CD8-positive, alpha-beta T cell (primary cell): ENCODE measurements at regions of chr1 and their contacts with region 1.

Region 1: DNA sequence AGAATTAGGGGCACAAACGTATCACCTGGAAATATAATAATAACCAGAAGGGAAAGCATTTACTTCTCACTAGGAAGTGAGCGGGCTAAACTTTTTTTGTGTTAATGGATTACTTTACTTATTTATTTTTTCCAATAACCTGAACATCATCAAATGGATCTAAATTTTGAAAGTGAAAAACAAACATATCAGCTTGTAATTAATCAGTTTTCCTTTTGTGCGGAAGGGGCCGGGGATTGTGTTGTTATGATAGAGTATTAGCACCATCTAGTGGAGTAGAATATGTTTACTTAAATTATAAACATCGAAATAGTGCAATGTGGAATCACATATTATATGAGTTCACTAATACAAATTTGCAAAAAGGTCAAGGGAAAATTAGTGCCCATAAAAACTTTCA is 9.0 kb downstream of the CFH start:
- DNase-seq: peak in 2 of 9 experiments; percentile 30 to 45
- ATAC-seq: peak; percentile 40
- H3K4me3 ChIP-seq: no peak overlapping the region
- H3K4me3 Mint-ChIP-seq: peak overlapping the region; percentile 20
- H3K27ac ChIP-seq: no peak overlapping the region
- H3K27ac Mint-ChIP-seq: no peak overlapping the region
- H3K4me1 ChIP-seq: no peaks in the 10 kb centered on the region
- H3K4me1 Mint-ChIP-seq: peaks cover 5% of the 10 kb centered on the region
- H3K27me3 ChIP-seq: no peaks in the 10 kb centered on the region
- H3K27me3 Mint-ChIP-seq: no peaks in the 10 kb centered on the region
- CTCF ChIP-seq: peak; percentile 51

Region 2: DNA sequence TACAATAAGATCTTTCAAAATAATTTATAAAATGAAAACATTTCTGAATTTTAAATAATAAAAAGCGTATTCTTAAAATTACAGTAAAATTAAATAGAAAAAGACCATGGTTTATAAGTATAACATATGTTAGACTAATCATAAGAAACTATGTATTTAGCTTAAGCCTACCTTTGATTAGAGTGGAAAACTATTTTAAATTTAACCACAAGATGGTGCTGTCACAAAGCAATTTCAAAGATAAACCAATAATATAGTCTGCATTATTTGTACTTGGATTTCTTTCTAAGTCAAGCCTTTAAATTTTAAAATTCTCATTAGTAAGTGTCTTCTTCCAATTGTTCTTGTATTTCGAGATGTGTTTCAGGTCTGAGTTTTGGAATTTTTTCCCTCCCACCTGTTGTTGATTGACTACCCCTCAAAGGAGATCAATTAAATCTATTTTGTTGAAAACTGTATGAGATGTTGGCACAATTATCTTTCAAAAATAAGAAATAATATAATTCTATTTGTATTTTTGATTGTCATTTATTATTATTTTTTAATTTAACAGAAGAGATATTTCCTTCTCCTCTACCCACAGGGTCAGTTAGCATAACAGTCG is 512.4 kb before region 1 on chr1:
- CTCF ChIA-PET with region 1: interaction called, 9 read pairs
- POLR2A ChIA-PET with region 1: no interaction called
- intact Hi-C with region 1: loop called (anchors 1 kb)
- DNase-seq: peak in 2 of 9 experiments; percentile 15 to 22
- ATAC-seq: no peak
- H3K4me3 ChIP-seq: no peak overlapping the region
- H3K4me3 Mint-ChIP-seq: no peak overlapping the region
- H3K27ac ChIP-seq: no peak overlapping the region
- H3K27ac Mint-ChIP-seq: no peak overlapping the region
- H3K4me1 ChIP-seq: no peaks in the 10 kb centered on the region
- H3K4me1 Mint-ChIP-seq: no peaks in the 10 kb centered on the region
- H3K27me3 ChIP-seq: no peaks in the 10 kb centered on the region
- H3K27me3 Mint-ChIP-seq: no peaks in the 10 kb centered on the region
- CTCF ChIP-seq: peak; percentile 42

Region 3: DNA sequence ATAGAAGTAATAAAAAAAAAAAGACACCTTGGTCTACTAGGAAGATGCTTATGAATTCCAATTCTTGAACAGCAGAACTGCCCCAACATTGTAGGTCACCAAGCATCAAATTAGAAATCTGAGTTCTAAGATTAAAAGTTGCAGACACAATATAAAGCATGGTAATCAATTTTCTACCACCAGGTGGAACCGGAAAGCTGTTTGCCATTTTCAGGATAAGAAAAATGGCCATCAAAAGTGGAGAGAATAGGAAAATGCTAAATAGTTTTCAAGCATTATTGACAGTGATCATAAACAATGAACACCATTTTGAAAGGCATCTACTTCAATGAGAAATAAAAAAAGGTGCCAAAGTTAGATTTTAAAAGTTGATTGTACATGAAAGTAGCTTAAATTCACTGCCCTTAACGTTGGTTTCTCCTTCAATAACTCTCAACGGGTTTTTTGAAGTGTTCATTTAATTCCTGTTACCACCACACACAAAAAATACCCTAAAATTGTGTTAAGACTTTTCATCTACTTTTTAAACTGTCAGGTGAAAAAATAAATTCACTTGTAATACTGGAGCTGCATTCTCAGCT is 305.6 kb before region 1 on chr1:
- CTCF ChIA-PET with region 1: no interaction called
- POLR2A ChIA-PET with region 1: no interaction called
- intact Hi-C with region 1: loop called in 1 of 2 experiments (anchors 5 kb)
- DNase-seq: peak in 1 of 9 experiments; percentile 10
- ATAC-seq: no peak
- H3K4me3 ChIP-seq: no peak overlapping the region
- H3K4me3 Mint-ChIP-seq: no peak overlapping the region
- H3K27ac ChIP-seq: no peak overlapping the region
- H3K27ac Mint-ChIP-seq: no peak overlapping the region
- H3K4me1 ChIP-seq: no peaks in the 10 kb centered on the region
- H3K4me1 Mint-ChIP-seq: no peaks in the 10 kb centered on the region
- H3K27me3 ChIP-seq: no peaks in the 10 kb centered on the region
- H3K27me3 Mint-ChIP-seq: no peaks in the 10 kb centered on the region
- CTCF ChIP-seq: no peak

Region 4: GRCh38 chr1:196493881-196494280 is 167.0 kb before region 1 on chr1:
- CTCF ChIA-PET with region 1: no interaction called
- POLR2A ChIA-PET with region 1: no interaction called
- intact Hi-C with region 1: no loop called
- DNase-seq: no peak
- ATAC-seq: no peak
- H3K4me3 ChIP-seq: no peak overlapping the region
- H3K4me3 Mint-ChIP-seq: no peak overlapping the region
- H3K27ac ChIP-seq: no peak overlapping the region
- H3K27ac Mint-ChIP-seq: no peak overlapping the region
- H3K4me1 ChIP-seq: no peaks in the 10 kb centered on the region
- H3K4me1 Mint-ChIP-seq: no peaks in the 10 kb centered on the region
- H3K27me3 ChIP-seq: no peaks in the 10 kb centered on the region
- H3K27me3 Mint-ChIP-seq: no peaks in the 10 kb centered on the region
- CTCF ChIP-seq: no peak